A549 (cell line): ENCODE measurements at regions of chr10 and their contacts with region 1.

Region 1: GRCh38 chr10:122267849-122268737 is 3.0 kb upstream of the BTBD16 start:
- DNase-seq: peak; percentile 61 to 76
- ATAC-seq: peak; percentile 82 to 93
- H3K4me3 ChIP-seq: no peak overlapping the region
- H3K27ac ChIP-seq: peak overlapping the region; percentile 65 to 67; a peak in 5 of 6 replicates
- H3K4me1 ChIP-seq: peaks cover 40% of the 10 kb centered on the region
- CTCF ChIP-seq: peak; percentile 78
- EP300 ChIP-seq: no peak
- POLR2A ChIP-seq: no peak
- RAD21 ChIP-seq: peak; percentile 53 to 64

Region 2: DNA sequence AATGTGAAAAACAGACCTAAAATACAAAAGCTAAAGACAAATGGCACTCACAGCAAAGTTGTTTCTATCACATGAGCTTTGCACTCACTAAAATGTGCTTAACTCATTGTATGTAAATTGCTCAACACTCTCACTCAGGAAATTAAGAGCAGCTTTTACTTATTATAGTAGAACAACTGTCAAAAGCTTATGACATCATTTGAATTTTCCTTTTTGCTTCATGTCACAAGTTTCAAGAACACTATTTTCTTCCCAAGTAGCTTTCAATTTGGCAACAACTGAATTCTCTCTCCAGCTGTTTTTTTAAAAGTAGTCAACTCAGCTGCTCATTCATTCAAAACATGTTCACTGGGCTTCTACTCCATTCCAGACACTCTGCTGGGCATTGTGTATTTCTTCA is 387.2 kb before region 1 on chr10:
- CTCF ChIA-PET with region 1: no interaction called
- POLR2A ChIA-PET with region 1: no interaction called
- DNase-seq: no peak
- ATAC-seq: no peak
- H3K4me3 ChIP-seq: no peak overlapping the region
- H3K27ac ChIP-seq: no peak overlapping the region
- H3K4me1 ChIP-seq: no peaks in the 10 kb centered on the region
- CTCF ChIP-seq: no peak
- EP300 ChIP-seq: no peak
- POLR2A ChIP-seq: no peak
- RAD21 ChIP-seq: no peak

Region 3: DNA sequence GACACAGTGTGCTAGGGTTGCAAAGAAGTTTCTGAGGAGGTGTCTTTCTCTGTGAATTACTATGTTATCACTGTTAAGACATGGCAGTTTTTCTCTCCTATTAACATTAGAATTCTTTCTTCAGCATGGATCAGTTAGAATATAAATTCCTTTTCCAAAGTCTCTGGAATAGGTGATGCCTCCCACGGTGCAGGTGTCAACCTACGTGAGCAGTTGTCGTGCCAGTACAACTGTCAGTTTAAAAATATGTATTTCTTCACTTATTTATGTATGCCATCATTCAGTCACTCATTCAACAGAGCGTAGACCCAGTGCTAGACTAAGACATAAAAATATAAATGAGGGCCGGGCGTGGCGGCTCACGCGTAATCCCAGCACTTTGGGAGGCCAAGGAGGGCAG is 195.6 kb before region 1 on chr10:
- CTCF ChIA-PET with region 1: no interaction called
- POLR2A ChIA-PET with region 1: no interaction called
- DNase-seq: no peak
- ATAC-seq: no peak
- H3K4me3 ChIP-seq: no peak overlapping the region
- H3K27ac ChIP-seq: peak overlapping the region; percentile 93 to 94; a peak in 5 of 6 replicates
- H3K4me1 ChIP-seq: peaks cover 46% of the 10 kb centered on the region
- CTCF ChIP-seq: no peak
- EP300 ChIP-seq: no peak
- POLR2A ChIP-seq: no peak
- RAD21 ChIP-seq: no peak

Region 4: DNA sequence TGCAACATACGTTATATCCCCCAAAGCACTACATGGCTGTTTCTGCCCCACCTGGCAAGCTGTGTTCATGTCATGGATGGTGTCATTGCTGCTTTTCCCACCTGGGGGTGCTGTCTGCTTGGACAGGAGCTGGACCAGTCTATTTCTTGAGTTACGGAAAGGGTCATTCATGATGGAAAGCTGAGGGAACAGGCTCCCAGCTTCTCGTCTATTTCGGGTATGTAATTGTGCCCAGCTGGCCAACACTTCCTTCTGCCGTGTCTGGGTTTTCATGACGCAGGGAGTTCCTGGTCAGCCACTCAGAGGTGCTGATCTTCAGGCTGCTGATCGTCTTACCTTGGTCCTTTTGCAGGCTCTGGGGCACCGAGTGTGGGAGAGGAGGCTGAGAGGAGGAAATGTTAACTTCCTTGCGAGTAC is 11.6 kb after region 1 on chr10:
- CTCF ChIA-PET with region 1: interaction called, 27 read pairs
- POLR2A ChIA-PET with region 1: no interaction called
- DNase-seq: peak; percentile 24 to 56
- ATAC-seq: peak; percentile 33 to 70; a peak in 3 of 6 replicates
- H3K4me3 ChIP-seq: no peak overlapping the region
- H3K27ac ChIP-seq: no peak overlapping the region
- H3K4me1 ChIP-seq: peaks cover 10% of the 10 kb centered on the region
- CTCF ChIP-seq: peak; percentile 53
- EP300 ChIP-seq: no peak
- POLR2A ChIP-seq: no peak
- RAD21 ChIP-seq: peak; percentile 59 to 80